ENCODE measurements at regions of chr4 and their contacts with region 1.

Region 1: GRCh38 chr4:36351082-36351666 is 69.8 kb downstream of the DTHD1 start:
- DNase-seq: peak; percentile 37
- ATAC-seq: peak; percentile 72
- H3K4me3 ChIP-seq: no peak overlapping the region
- H3K27ac ChIP-seq: no peak overlapping the region
- H3K4me1 ChIP-seq: peaks cover 13% of the 10 kb centered on the region
- H3K27me3 ChIP-seq: no peaks in the 10 kb centered on the region
- CTCF ChIP-seq: peak; percentile 70 to 87 (median 78)
- EP300 ChIP-seq: no peak
- POLR2A ChIP-seq: no peak
- RAD21 ChIP-seq: peak; percentile 96

Region 2: DNA sequence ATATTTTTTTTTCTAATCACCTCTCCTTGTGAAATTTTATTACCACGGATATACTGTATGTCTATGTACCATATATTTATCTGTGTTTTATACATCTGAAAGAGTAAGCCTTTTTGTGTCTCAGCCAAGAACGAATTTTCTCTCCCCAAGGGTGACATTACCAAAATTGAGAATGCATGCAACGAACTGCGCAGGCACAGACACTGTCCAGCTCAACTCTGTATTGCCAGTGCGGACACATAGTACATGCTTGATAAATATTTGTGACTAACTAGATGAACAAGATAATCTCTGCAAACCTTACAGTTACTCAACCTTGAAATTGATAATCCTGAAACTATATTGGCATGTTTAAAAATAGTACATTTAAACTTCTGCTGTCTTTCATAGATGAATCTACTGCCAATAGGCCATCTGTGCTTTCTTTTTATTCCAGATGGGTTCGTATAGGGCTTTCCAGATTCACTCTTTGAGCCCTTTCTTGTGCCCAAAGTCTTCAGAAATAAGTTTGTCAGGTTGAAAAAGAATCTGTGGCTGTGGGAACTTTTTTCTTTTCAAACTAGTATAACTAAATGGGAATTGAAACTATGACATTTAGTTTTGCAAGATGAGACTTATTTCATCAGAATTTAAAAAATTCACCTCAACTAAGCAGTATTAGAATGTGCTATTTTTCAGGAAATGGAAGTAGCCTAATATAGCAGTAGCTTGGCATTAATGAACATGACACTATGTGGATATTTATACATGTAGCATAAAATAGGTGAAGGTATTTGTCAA is 30.9 kb before region 1 on chr4:
- CTCF ChIA-PET with region 1: interaction called, 6 read pairs
- POLR2A ChIA-PET with region 1: interaction called, 8 read pairs
- RAD21 ChIA-PET with region 1: interaction called, 21 read pairs
- SMC1A ChIA-PET with region 1: interaction called, 32 read pairs
- in situ Hi-C with region 1: no loop called
- intact Hi-C with region 1: no loop called
- DNase-seq: peak; percentile 54
- ATAC-seq: peak; percentile 78
- H3K4me3 ChIP-seq: no peak overlapping the region; the same call in 1 of the 2 replicates
- H3K27ac ChIP-seq: peak overlapping the region; percentile 79
- H3K4me1 ChIP-seq: peaks cover 52% of the 10 kb centered on the region
- H3K27me3 ChIP-seq: no peaks in the 10 kb centered on the region
- CTCF ChIP-seq: no peak
- EP300 ChIP-seq: peak in 1 of 2 experiments; percentile 39; a peak in 1 of 4 replicates
- POLR2A ChIP-seq: no peak
- RAD21 ChIP-seq: peak; percentile 29; the same call in 1 of the 2 replicates

Region 3: DNA sequence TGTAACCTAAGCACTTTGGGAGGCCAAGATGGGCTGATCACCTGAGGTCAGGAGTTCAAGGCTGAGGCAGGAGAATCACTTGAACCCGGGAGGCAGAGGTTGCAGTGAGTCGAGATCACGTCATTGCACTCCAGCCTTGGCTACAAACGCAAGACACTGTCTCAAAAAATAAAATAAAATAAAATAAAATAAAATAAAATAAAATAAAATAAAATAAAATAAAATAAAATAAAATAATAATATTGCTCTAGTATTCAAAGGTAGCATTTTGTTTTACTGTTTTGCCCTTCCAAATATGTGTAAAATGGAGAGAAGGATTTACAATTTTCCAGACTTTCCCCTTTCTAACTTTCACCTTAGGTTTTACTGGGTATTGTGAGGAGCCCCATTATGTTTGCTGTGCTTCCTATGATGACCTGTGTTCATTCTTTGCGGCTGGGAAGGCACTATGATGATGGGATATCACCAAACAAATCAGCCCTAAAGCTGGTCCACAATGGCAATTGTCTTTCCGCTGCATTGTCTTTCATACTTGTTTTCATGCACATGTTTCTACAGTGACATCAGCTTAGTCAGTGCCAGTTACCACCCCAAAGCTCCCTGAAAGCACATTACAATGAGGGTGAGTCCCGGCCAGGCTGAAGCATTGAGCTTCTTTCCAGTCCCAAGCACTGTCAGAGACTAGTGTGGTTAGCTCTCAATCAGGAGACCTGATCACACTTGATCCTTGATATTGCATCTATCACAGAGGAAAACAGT is 19.0 kb before region 1 on chr4:
- CTCF ChIA-PET with region 1: interaction called, 16 read pairs
- POLR2A ChIA-PET with region 1: no interaction called
- RAD21 ChIA-PET with region 1: interaction called, 20 read pairs
- SMC1A ChIA-PET with region 1: interaction called, 67 read pairs
- in situ Hi-C with region 1: no loop called
- intact Hi-C with region 1: no loop called
- DNase-seq: peak; percentile 61
- ATAC-seq: peak; percentile 89
- H3K4me3 ChIP-seq: peak overlapping the region; percentile 41; the same call in 1 of the 2 replicates
- H3K27ac ChIP-seq: peak overlapping the region; percentile 91
- H3K4me1 ChIP-seq: peaks cover 22% of the 10 kb centered on the region
- H3K27me3 ChIP-seq: no peaks in the 10 kb centered on the region
- CTCF ChIP-seq: no peak
- EP300 ChIP-seq: no peak
- POLR2A ChIP-seq: peak; percentile 78
- RAD21 ChIP-seq: no peak

Region 4: GRCh38 chr4:36502350-36502749 is 151.2 kb after region 1 on chr4:
- CTCF ChIA-PET with region 1: no interaction called
- POLR2A ChIA-PET with region 1: no interaction called
- RAD21 ChIA-PET with region 1: no interaction called
- SMC1A ChIA-PET with region 1: no interaction called
- in situ Hi-C with region 1: no loop called
- intact Hi-C with region 1: no loop called
- DNase-seq: no peak
- ATAC-seq: no peak
- H3K4me3 ChIP-seq: no peak overlapping the region
- H3K27ac ChIP-seq: no peak overlapping the region
- H3K4me1 ChIP-seq: no peaks in the 10 kb centered on the region
- H3K27me3 ChIP-seq: no peaks in the 10 kb centered on the region
- CTCF ChIP-seq: no peak
- EP300 ChIP-seq: no peak
- POLR2A ChIP-seq: no peak
- RAD21 ChIP-seq: no peak

Region 5: DNA sequence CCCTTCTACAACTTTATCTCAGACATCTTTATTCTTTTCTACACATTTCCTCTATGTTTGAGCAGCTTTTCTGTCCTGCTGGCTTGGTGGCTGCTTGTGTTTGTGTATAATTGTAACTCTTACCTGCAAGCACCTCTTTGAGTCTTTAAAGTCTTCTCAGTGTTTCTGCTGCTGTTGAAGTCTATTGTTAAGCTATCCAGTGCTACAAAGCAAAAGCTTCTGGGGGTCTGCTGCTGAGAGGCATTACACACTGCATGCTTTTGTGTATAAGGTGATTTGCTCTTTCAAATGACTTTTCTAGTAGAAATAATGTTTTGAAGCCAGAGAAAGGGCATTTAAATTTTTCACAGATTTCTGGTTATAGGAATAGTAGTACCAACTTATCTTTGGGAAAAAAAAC is 172.0 kb after region 1 on chr4:
- CTCF ChIA-PET with region 1: no interaction called
- POLR2A ChIA-PET with region 1: no interaction called
- RAD21 ChIA-PET with region 1: no interaction called
- SMC1A ChIA-PET with region 1: no interaction called
- in situ Hi-C with region 1: no loop called
- intact Hi-C with region 1: no loop called
- DNase-seq: no peak
- ATAC-seq: no peak
- H3K4me3 ChIP-seq: no peak overlapping the region
- H3K27ac ChIP-seq: no peak overlapping the region
- H3K4me1 ChIP-seq: no peaks in the 10 kb centered on the region
- H3K27me3 ChIP-seq: no peaks in the 10 kb centered on the region
- CTCF ChIP-seq: no peak
- EP300 ChIP-seq: no peak
- POLR2A ChIP-seq: no peak
- RAD21 ChIP-seq: no peak

Region 6: DNA sequence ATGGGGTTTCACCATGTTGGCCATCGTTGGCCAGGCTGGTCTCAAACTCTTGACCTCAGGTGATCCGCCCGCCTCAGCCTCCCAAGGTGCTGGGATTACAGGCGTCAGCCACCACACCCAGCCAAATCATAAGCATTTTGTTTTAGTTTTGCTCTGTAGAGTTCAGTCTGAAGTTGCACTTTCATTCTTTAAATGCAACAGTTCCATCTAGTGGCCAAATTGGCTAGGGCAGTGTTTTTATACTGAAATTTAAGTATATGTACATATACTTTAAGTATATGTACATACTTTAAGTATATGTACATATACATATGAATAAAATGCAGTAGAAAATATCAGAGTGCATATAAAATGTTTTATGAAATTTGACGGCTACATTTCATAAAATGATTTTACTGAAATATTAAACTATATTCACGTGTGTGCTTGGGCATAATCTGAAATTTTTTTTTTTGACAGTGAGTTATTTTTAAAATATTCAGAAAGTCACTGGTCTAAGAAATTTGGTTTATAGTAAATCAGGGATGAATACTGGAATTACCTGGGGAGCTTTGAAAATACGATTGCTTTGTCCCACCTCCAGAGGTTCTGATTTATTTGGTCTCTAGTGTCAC is 1038.9 kb after region 1 on chr4:
- CTCF ChIA-PET with region 1: interaction called, 11 read pairs
- POLR2A ChIA-PET with region 1: no interaction called
- RAD21 ChIA-PET with region 1: interaction called, 3 read pairs
- SMC1A ChIA-PET with region 1: interaction called, 4 read pairs
- in situ Hi-C with region 1: loop called (anchors 10 kb)
- intact Hi-C with region 1: loop called (anchors 2 kb)
- DNase-seq: no peak
- ATAC-seq: peak; percentile 84
- H3K4me3 ChIP-seq: no peak overlapping the region
- H3K27ac ChIP-seq: no peak overlapping the region
- H3K4me1 ChIP-seq: no peaks in the 10 kb centered on the region
- H3K27me3 ChIP-seq: no peaks in the 10 kb centered on the region
- CTCF ChIP-seq: peak; percentile 62 to 75 (median 70)
- EP300 ChIP-seq: no peak
- POLR2A ChIP-seq: no peak
- RAD21 ChIP-seq: peak; percentile 79

Measured in GM12878 (cell line).